ENCODE measurements at regions of chr20 and their contacts with region 1.

Region 1: GRCh38 chr20:63973636-63974402 is 4.1 kb upstream of the ZNF512B start:
- DNase-seq: peak; percentile 83
- H3K4me3 Mint-ChIP-seq: no peak overlapping the region
- H3K27ac Mint-ChIP-seq: peak overlapping the region; percentile 31
- H3K4me1 Mint-ChIP-seq: peaks cover 37% of the 10 kb centered on the region
- H3K27me3 Mint-ChIP-seq: no peaks in the 10 kb centered on the region

Region 2: DNA sequence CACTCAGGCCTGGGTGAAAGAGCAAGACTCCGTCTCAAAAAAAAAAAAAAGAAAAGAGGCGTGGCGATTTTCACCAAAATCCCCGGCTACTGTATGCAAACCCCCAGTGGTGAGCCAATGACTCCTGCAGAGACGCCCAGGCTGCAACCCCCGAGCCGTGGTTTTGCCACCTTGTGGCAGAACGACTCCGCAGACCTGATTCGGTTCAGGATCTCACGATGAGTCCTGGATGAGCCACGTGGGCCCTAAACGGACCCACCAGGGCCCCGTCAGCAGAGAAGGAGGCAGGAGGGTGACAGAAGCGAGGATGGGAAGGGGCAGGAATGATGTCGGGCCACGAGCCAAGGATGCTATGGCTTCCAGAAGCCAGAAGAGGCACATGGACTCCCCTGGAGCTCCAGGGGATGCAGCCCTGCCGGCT is 191.8 kb before region 1 on chr20:
- CTCF ChIA-PET with region 1: interaction called, 6 read pairs
- POLR2A ChIA-PET with region 1: no interaction called
- intact Hi-C with region 1: loop called (anchors 5 kb)
- DNase-seq: peak; percentile 79
- H3K4me3 Mint-ChIP-seq: no peak overlapping the region
- H3K27ac Mint-ChIP-seq: no peak overlapping the region
- H3K4me1 Mint-ChIP-seq: peaks cover 13% of the 10 kb centered on the region
- H3K27me3 Mint-ChIP-seq: no peaks in the 10 kb centered on the region

Region 3: GRCh38 chr20:64047968-64048401 is 74.2 kb after region 1 on chr20:
- CTCF ChIA-PET with region 1: no interaction called
- POLR2A ChIA-PET with region 1: no interaction called
- intact Hi-C with region 1: no loop called
- DNase-seq: no peak
- H3K4me3 Mint-ChIP-seq: no peak overlapping the region
- H3K27ac Mint-ChIP-seq: no peak overlapping the region
- H3K4me1 Mint-ChIP-seq: peaks cover 2% of the 10 kb centered on the region
- H3K27me3 Mint-ChIP-seq: peaks cover 42% of the 10 kb centered on the region